ENCODE measurements at regions of chr1 and their contacts with region 1.

Region 1: GRCh38 chr1:160945079-160945478 is 9.5 kb downstream of the ITLN2 start:
- DNase-seq: no peak
- ATAC-seq: no peak
- H3K4me3 ChIP-seq: no peak overlapping the region
- H3K27ac ChIP-seq: no peak overlapping the region
- H3K4me1 ChIP-seq: no peaks in the 10 kb centered on the region
- H3K27me3 ChIP-seq: no peaks in the 10 kb centered on the region
- CTCF ChIP-seq: no peak
- POLR2A ChIP-seq: no peak
- RAD21 ChIP-seq: no peak

Region 2: DNA sequence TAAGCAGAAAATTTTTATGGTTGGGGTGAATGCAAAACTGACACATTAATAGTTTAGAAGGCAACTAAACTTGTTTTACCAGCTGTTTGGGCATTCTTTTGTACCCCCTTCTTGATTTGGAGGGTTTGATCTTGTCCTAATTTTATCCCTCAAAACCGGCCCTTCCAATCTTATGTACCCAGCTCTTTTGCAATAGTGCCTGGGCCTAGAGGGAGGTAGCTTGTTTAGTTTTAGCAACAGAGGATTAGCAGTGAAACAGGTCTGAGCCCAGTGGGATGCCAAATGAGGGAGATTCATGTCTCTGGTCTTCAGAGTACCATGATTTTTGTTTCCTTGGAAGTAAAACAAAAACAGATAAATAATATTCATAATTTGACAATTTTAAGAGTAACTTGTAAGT is 1275.7 kb before region 1 on chr1:
- CTCF ChIA-PET with region 1: no interaction called
- POLR2A ChIA-PET with region 1: interaction called, 15 read pairs
- dilution Hi-C with region 1: no loop called
- in situ Hi-C with region 1: no loop called
- intact Hi-C with region 1: no loop called
- DNase-seq: no peak
- ATAC-seq: no peak
- H3K4me3 ChIP-seq: no peak overlapping the region
- H3K27ac ChIP-seq: no peak overlapping the region
- H3K4me1 ChIP-seq: no peaks in the 10 kb centered on the region
- H3K27me3 ChIP-seq: no peaks in the 10 kb centered on the region
- CTCF ChIP-seq: no peak
- POLR2A ChIP-seq: no peak
- RAD21 ChIP-seq: no peak

Measured in IMR-90 (cell line).